Activated B cell treated with CpG ODN at 0.5 μM for 24 hours (primary cell): ENCODE measurements at regions of chr3 and their contacts with region 1.

Region 1: DNA sequence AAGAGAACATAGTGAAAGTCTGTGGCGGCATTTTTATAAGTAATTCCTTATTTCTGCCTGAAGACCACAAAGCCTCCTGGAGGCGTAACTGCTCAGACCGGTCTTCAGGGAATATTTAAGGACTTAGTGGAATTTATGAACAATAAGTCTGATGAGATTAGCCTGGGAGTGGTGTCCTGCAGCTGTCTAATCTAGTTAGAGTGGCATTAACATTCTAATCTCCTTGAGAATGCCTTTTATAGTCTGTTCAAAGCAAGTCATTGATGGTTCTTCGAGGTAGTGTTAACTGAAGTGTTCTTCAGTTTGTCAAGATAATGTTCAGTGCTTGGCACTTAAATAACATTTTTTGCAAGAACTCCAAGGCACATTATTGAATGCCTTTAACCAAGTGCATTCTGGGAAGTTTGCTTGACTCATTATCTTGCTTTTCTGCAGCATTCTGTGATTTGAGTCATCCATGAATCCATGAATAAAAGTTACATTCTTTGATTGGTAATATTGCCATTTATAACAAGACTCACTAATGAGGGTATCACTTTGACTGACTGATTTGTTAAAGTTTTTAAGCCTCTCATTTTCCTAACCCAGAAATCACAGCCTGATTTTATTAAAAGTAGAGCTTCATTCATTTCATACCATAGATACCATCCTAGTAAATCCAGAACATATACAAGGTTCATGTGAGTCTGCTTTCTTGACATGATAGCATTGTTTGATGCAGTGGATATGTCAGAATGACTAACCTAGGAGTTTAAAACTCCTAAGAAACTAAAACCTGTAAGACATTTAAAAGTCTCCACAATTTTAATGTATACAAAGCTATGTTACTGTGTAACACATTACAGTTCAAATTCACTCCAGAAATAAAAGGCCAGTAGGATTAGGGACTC is 12.5 kb downstream of the RBM5 start:
- DNase-seq: no peak
- ATAC-seq: no peak
- H3K4me3 Mint-ChIP-seq: no peak overlapping the region
- H3K27ac Mint-ChIP-seq: no peak overlapping the region
- H3K4me1 Mint-ChIP-seq: no peaks in the 10 kb centered on the region
- H3K27me3 Mint-ChIP-seq: no peaks in the 10 kb centered on the region
- CTCF ChIP-seq: no peak

Region 2: GRCh38 chr3:48301020-48301796 is 1800.0 kb before region 1 on chr3:
- CTCF ChIA-PET with region 1: no interaction called
- POLR2A ChIA-PET with region 1: interaction called, 10 read pairs
- intact Hi-C with region 1: no loop called
- DNase-seq: peak; percentile 95
- ATAC-seq: peak; percentile 91
- H3K4me3 Mint-ChIP-seq: peak within 1 kb of the TSS; percentile 97
- H3K27ac Mint-ChIP-seq: peak within 1 kb of the TSS; percentile 98
- H3K4me1 Mint-ChIP-seq: peaks cover 42% of the 10 kb centered on the region
- H3K27me3 Mint-ChIP-seq: no peaks in the 10 kb centered on the region
- CTCF ChIP-seq: no peak

Region 3: GRCh38 chr3:49388289-49388820 is 712.8 kb before region 1 on chr3:
- CTCF ChIA-PET with region 1: no interaction called
- POLR2A ChIA-PET with region 1: interaction called, 10 read pairs
- intact Hi-C with region 1: no loop called
- DNase-seq: no peak
- ATAC-seq: no peak
- H3K4me3 Mint-ChIP-seq: no peak overlapping the region
- H3K27ac Mint-ChIP-seq: peak overlapping the region; percentile 66
- H3K4me1 Mint-ChIP-seq: peaks cover 65% of the 10 kb centered on the region
- H3K27me3 Mint-ChIP-seq: no peaks in the 10 kb centered on the region
- CTCF ChIP-seq: no peak

Region 4: GRCh38 chr3:49652903-49653415 is 448.2 kb before region 1 on chr3:
- CTCF ChIA-PET with region 1: no interaction called
- POLR2A ChIA-PET with region 1: interaction called, 13 read pairs
- intact Hi-C with region 1: no loop called
- DNase-seq: no peak
- ATAC-seq: no peak
- H3K4me3 Mint-ChIP-seq: no peak overlapping the region
- H3K27ac Mint-ChIP-seq: no peak overlapping the region
- H3K4me1 Mint-ChIP-seq: peaks cover 8% of the 10 kb centered on the region
- H3K27me3 Mint-ChIP-seq: no peaks in the 10 kb centered on the region
- CTCF ChIP-seq: no peak

Region 5: GRCh38 chr3:51371943-51372557 is 1270.8 kb after region 1 on chr3:
- CTCF ChIA-PET with region 1: no interaction called
- POLR2A ChIA-PET with region 1: no interaction called
- intact Hi-C with region 1: no loop called
- DNase-seq: no peak
- ATAC-seq: no peak
- H3K4me3 Mint-ChIP-seq: no peak overlapping the region
- H3K27ac Mint-ChIP-seq: no peak overlapping the region
- H3K4me1 Mint-ChIP-seq: no peaks in the 10 kb centered on the region
- H3K27me3 Mint-ChIP-seq: peaks cover 46% of the 10 kb centered on the region
- CTCF ChIP-seq: no peak